ENCODE measurements at regions of chr11 and their contacts with region 1.

Region 1: GRCh38 chr11:118791111-118791965 is at the start of gene DDX6:
- DNase-seq: peak; percentile 82
- H3K4me3 ChIP-seq: peak within 1 kb of the TSS; percentile 78 to 95
- H3K27ac ChIP-seq: peak within 1 kb of the TSS; percentile 99 to 100
- H3K4me1 ChIP-seq: peaks cover 12% of the 10 kb centered on the region
- H3K27me3 ChIP-seq: no peaks in the 10 kb centered on the region
- CTCF ChIP-seq: peak; percentile 18 to 80 (median 44)
- POLR2A ChIP-seq: peak; percentile 98
- total RNA-seq, gene DDX6: 122 to 127 TPM

Region 2: GRCh38 chr11:118689851-118690552 is 101.3 kb before region 1 on chr11:
- intact Hi-C with region 1: loop called (anchors 2 kb)
- DNase-seq: peak; percentile 77
- H3K4me3 ChIP-seq: peak overlapping the region; percentile 20 to 25
- H3K27ac ChIP-seq: peak overlapping the region; percentile 80 to 82
- H3K4me1 ChIP-seq: no peaks in the 10 kb centered on the region
- H3K27me3 ChIP-seq: no peaks in the 10 kb centered on the region
- CTCF ChIP-seq: peak; percentile 69 to 89 (median 86)
- POLR2A ChIP-seq: no peak

Region 3: GRCh38 chr11:118930094-118930712 is 138.9 kb after region 1 on chr11:
- intact Hi-C with region 1: loop called (anchors 2 kb)
- DNase-seq: peak; percentile 95
- H3K4me3 ChIP-seq: peak overlapping the region; percentile 67 to 77
- H3K27ac ChIP-seq: peak overlapping the region; percentile 100
- H3K4me1 ChIP-seq: peaks cover 7% of the 10 kb centered on the region
- H3K27me3 ChIP-seq: no peaks in the 10 kb centered on the region
- CTCF ChIP-seq: peak; percentile 96 to 100 (median 99)
- POLR2A ChIP-seq: peak; percentile 50

Region 4: DNA sequence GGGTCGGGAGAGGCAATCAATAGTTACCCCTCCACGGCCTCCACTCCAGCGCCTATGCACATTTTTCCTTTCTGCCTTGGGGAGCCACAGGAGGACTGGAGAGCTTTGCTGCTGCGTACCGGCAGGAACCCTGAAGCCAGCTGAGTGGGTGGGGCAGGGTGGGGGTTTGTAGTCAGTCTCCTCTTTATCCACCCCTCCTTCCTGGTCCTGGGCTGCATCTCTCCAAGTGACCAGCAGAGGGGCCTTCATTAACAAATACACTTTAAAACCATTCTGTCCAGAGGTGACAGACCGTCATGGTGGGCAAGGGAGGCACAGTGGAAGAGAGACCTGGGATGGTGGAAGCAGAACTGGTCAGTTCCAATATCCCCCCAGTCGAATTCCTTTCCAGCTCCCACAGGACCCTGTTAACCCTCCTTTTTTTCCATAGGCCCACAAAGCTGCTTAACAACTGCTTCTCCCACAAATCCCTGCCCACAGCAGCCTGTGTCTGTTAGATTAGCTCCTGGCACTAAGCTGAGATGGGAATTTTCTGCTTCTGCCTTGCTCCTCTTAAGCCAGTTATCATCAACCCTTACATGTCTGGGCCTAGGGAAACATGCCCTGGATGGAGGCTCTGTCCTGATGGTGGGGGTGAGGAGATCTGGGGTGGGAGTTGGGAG is 353.6 kb after region 1 on chr11:
- intact Hi-C with region 1: no loop called
- DNase-seq: peak; percentile 26
- H3K4me3 ChIP-seq: no peak overlapping the region
- H3K27ac ChIP-seq: no peak overlapping the region
- H3K4me1 ChIP-seq: no peaks in the 10 kb centered on the region
- H3K27me3 ChIP-seq: no peaks in the 10 kb centered on the region
- CTCF ChIP-seq: peak; percentile 42 to 59 (median 51)
- POLR2A ChIP-seq: no peak

Measured in prostate gland (tissue), 2 donors.